ENCODE measurements at regions of chr19 and their contacts with region 1.

Region 1: DNA sequence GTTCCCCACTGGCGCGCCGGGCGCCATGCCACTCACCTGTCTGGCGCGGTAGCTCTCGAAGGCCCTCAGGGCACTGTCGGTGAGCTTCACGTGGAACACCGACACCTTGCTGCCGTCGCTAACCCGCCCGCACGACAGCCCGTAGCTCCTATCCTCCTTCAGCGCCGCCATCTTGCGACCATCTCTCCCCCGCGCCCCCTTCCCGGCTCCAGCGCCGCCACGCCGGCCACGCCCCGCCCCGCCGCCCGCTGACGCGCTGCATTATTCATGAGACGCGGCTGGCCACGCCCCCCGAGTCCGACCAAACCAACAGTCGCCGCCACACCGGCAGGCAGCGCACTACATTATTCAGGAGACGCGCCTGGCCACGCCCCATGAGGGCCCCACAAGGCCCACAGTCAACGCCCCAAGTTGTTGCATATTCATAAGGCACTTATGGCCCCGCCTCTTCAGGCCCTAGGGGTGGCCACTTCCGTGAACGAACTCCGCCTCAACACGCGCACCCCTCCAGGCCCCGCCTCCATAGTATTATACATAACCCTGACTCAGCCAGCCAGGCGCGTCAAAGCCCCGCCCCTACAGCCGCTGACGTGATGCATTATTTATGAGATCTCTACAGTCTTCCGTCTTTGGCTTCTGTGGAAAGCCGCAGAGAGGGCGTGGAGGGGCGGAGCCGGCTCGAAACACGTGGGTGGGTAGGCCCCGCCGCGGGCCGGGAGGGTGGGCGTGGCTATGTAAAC is at the start of gene ELL:
- DNase-seq: peak; percentile 100
- H3K4me3 ChIP-seq: peak within 1 kb of the TSS; percentile 71 to 85 (median 82)
- H3K27ac ChIP-seq: peak within 1 kb of the TSS; percentile 89
- H3K4me1 ChIP-seq: peaks cover 12% of the 10 kb centered on the region
- H3K27me3 ChIP-seq: no peaks in the 10 kb centered on the region
- CTCF ChIP-seq: peak in 1 of 2 donors; percentile 7
- POLR2A ChIP-seq: peak; percentile 95
- total RNA-seq, gene ELL: 15.5 and 18.2 TPM in 2 replicates

Region 2: GRCh38 chr19:18469069-18469846 is 52.8 kb before region 1 on chr19:
- CTCF ChIA-PET with region 1: interaction called, 25 read pairs
- POLR2A ChIA-PET with region 1: no interaction called
- dilution Hi-C with region 1: no loop called
- intact Hi-C with region 1: loop called (anchors 2 kb)
- DNase-seq: peak; percentile 49
- H3K4me3 ChIP-seq: no peak overlapping the region
- H3K27ac ChIP-seq: no peak overlapping the region
- H3K4me1 ChIP-seq: no peaks in the 10 kb centered on the region
- H3K27me3 ChIP-seq: no peaks in the 10 kb centered on the region
- CTCF ChIP-seq: peak; percentile 86 to 89
- POLR2A ChIP-seq: no peak

Region 3: GRCh38 chr19:18507021-18507726 is 14.9 kb before region 1 on chr19:
- CTCF ChIA-PET with region 1: interaction called, 14 read pairs
- POLR2A ChIA-PET with region 1: interaction called, 3 read pairs
- dilution Hi-C with region 1: no loop called
- intact Hi-C with region 1: no loop called
- DNase-seq: peak; percentile 27
- H3K4me3 ChIP-seq: no peak overlapping the region
- H3K27ac ChIP-seq: no peak overlapping the region
- H3K4me1 ChIP-seq: peaks cover 14% of the 10 kb centered on the region
- H3K27me3 ChIP-seq: no peaks in the 10 kb centered on the region
- CTCF ChIP-seq: no peak
- POLR2A ChIP-seq: no peak

Region 4: GRCh38 chr19:18557474-18558201 is 35.6 kb after region 1 on chr19 and contains the start of gene KXD1:
- CTCF ChIA-PET with region 1: interaction called, 12 read pairs
- POLR2A ChIA-PET with region 1: interaction called, 8 read pairs
- dilution Hi-C with region 1: no loop called
- intact Hi-C with region 1: loop called (anchors 1 kb)
- DNase-seq: peak; percentile 98
- H3K4me3 ChIP-seq: peak within 1 kb of the TSS; percentile 56 to 90 (median 81)
- H3K27ac ChIP-seq: peak within 1 kb of the TSS; percentile 84
- H3K4me1 ChIP-seq: peaks cover 28% of the 10 kb centered on the region
- H3K27me3 ChIP-seq: no peaks in the 10 kb centered on the region
- CTCF ChIP-seq: no peak
- POLR2A ChIP-seq: peak; percentile 66
- total RNA-seq, gene KXD1: 127 and 134 TPM in 2 replicates

Region 5: DNA sequence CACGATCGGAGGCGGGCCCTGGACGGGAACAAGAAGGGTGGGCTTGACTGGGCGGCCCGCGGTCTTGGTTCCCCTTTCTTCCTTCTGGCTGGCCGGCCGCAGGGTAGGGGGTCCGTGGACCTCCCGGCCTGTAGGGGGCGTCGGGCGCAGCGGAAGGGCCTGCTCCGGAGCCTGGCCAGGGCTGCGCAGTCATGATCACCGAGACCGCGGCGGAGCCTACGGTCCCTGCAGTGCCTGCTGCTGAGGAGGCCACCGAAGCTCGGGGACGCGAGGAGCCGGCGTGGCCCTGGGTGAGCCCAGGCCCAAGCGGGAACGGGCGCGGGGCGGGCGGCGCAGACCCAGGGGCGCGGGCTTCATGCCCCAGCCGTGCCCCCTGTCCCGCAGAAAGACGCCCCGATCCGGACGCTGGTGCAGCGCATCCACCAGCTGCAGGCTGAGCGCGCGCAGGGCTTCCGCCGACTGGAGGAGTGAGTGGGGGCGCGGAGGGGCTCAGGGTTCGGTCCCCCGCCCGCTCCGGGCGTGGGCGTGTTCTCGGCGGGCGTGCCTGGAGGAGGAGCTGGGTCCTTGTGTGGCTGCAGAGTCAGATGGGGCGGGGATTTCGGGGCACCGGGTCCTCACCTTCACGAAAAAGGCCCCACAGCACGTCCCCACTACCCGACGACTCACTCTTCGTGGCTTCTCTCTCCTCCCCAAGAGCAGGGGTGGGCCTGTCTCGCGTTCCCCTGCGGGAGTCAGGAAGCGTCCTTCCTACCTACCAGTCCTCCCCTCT is 66.7 kb after region 1 on chr19 and contains the start of gene REX1BD:
- CTCF ChIA-PET with region 1: interaction called, 10 read pairs
- POLR2A ChIA-PET with region 1: interaction called, 5 read pairs
- dilution Hi-C with region 1: no loop called
- intact Hi-C with region 1: loop called (anchors 1 kb)
- DNase-seq: peak; percentile 85
- H3K4me3 ChIP-seq: peak within 1 kb of the TSS; percentile 32 to 78 (median 65)
- H3K27ac ChIP-seq: peak within 1 kb of the TSS; percentile 16
- H3K4me1 ChIP-seq: peaks cover 15% of the 10 kb centered on the region
- H3K27me3 ChIP-seq: no peaks in the 10 kb centered on the region
- CTCF ChIP-seq: peak; percentile 95 to 96
- POLR2A ChIP-seq: peak; percentile 87
- total RNA-seq, gene REX1BD: 64.0 and 64.4 TPM in 2 replicates

Region 6: GRCh38 chr19:18672606-18673337 is 150.7 kb after region 1 on chr19:
- CTCF ChIA-PET with region 1: no interaction called
- POLR2A ChIA-PET with region 1: no interaction called
- dilution Hi-C with region 1: no loop called
- intact Hi-C with region 1: no loop called
- DNase-seq: peak; percentile 65
- H3K4me3 ChIP-seq: no peak overlapping the region
- H3K27ac ChIP-seq: no peak overlapping the region
- H3K4me1 ChIP-seq: peaks cover 9% of the 10 kb centered on the region
- H3K27me3 ChIP-seq: no peaks in the 10 kb centered on the region
- CTCF ChIP-seq: peak; percentile 3 to 52
- POLR2A ChIP-seq: no peak